Cardiac septum (tissue), 1 donor: ENCODE measurements at regions of chr19 and their contacts with region 1.

Region 1: DNA sequence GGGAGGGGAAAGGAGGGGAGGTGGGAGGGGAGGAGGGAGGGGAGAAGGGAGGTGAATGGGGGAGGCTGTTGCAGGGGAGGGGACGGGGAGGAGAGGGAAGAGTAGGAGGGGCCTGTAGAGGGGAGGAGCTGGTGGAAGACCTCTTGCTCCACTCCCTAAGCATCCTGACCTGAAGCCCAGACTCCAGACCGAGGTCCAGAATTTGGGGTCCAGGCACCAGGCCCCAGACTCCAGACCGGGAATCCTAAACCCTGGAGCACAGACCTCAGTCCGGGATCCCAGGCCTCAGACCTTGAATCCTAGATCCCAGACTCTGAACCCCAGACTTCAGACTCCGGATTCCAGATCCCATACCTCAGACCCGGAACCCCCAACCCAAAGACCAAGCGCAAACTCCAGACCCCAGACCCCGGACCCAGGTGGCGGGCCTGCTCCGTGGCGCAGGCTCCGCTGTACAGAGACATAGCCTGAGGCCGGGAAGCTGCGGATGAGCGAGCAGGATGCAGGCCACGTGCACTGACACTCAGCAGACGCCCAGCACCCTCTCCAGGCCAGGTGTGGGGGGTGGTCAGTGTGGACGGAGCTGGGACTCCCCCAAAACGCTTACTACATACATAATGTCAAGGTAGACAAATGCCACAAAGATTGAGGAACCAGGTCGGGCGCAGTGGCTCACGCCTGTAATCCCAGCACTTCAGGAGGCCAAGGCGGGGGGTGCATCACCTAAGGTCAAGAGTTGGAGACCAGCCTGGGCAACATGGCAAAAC is 710 bp upstream of the BTBD2 start:
- DNase-seq: peak; percentile 84

Region 2: GRCh38 chr19:1929021-1929742 is 87.0 kb before region 1 on chr19:
- intact Hi-C with region 1: loop called (anchors 5 kb)
- DNase-seq: peak; percentile 92

Region 3: DNA sequence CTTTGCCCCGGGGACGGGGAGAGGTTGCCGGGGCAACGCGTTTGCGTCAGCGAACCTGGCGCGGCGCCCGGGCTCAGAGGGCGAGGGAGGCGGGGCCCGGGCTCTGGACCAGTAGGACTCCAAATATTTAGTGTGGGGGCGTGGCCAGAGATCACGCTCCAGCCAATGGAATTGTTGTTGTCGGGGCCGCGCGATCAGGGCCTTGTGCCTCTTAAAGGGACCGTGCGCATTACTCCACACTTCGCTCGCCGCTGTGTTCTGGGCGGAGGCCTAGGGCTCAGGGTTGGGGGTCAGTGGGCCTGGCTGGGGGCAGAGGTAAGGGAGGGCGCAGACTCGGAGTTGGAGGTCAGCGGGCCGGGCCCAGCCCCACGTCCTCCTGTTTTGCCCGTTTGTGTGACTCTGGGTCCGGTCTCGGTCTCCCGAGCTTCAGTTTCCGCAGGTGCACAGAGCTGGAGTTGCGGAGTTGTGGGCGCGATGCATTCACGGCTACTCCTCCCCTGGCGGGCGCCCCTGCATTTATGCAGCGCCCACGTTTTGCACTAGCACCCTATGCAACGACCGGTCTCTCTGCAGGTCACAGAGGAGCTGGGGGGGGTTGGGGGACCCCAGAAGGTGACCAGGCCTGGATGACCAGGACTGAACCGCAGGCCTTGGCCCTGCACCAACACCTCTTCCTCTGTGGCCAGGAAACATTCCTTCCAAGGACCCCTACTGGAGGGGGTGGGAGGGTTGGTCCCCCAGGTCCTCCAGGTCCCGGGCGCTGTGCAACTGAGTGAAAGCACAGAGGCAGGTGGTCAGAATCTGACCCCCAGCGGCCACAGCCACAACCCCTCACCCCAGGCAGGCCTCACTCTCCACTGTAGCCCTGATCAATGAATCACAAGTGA is 45.5 kb after region 1 on chr19:
- intact Hi-C with region 1: no loop called
- DNase-seq: peak; percentile 99